ENCODE measurements at regions of chr9 and their contacts with region 1.

Region 1: DNA sequence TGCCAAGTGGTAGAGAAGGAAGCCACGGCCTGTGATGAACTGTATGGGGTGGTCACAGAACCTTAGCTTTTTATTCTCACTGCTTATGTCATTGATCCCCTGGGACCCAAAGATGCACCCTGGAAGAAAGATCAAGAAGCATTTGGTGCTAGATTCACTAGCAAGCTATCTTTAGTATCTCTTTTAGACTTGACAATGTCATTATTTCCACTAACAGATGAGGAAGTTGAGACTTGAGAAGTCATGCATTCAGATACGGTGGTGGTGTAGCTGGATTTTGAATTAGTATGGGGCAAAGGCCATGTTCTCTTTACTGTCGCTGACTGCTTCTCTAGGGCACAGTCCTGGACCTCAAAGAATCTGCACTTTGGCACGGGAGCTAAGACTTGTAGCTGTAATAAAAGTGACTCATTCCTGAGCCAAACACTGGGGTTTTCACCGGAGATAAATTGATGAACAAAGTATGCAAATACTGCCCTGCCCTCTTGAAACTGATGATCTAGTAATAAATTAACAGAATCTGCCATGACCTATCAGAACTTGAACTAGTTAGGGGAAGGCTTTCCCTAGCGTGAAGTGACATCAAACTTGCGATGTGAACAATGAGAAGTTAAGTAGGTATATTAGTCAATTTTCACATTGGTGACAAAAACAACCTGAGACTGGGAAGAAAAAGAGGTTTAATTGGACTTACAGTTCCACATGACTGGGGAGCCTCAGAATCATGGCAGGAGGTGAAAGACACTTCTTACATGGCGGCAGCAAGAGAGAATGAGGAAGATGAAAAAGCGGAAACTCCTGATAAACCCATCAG is 5.4 kb downstream of the GDA start:
- DNase-seq: no peak
- H3K4me3 ChIP-seq: no peak overlapping the region
- H3K27ac ChIP-seq: no peak overlapping the region
- H3K4me1 ChIP-seq: no peaks in the 10 kb centered on the region
- H3K27me3 ChIP-seq: peaks cover 0 to 9% of the 10 kb centered on the region in 2 donors
- CTCF ChIP-seq: no peak
- POLR2A ChIP-seq: no peak

Region 2: GRCh38 chr9:72169178-72169577 is 14.5 kb after region 1 on chr9:
- intact Hi-C with region 1: no loop called
- DNase-seq: no peak
- H3K4me3 ChIP-seq: no peak overlapping the region
- H3K27ac ChIP-seq: no peak overlapping the region
- H3K4me1 ChIP-seq: no peaks in the 10 kb centered on the region
- H3K27me3 ChIP-seq: no peaks in the 10 kb centered on the region
- CTCF ChIP-seq: no peak
- POLR2A ChIP-seq: no peak

Region 3: DNA sequence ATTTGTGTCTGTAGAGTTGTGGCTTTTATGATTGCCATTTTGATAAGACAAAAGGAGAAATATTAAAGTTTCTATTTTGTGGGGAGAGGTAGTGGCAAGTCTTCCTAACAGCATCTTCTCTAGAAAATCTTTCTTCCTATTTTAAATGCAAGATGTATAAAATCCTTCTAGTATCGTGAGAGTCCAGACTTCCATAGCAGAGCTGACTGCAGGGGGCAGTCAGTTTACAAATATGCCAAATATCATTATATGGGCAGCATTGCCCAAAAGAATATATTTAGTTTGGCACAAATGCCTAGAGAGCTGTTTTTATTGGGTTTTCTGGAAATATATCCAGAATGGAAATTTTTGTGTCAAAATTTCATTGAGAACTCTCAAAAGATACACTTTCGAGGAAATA is 880.3 kb after region 1 on chr9:
- intact Hi-C with region 1: no loop called
- DNase-seq: no peak
- H3K4me3 ChIP-seq: no peak overlapping the region
- H3K27ac ChIP-seq: no peak overlapping the region
- H3K4me1 ChIP-seq: no peaks in the 10 kb centered on the region
- H3K27me3 ChIP-seq: no peaks in the 10 kb centered on the region
- CTCF ChIP-seq: no peak
- POLR2A ChIP-seq: no peak

Region 4: DNA sequence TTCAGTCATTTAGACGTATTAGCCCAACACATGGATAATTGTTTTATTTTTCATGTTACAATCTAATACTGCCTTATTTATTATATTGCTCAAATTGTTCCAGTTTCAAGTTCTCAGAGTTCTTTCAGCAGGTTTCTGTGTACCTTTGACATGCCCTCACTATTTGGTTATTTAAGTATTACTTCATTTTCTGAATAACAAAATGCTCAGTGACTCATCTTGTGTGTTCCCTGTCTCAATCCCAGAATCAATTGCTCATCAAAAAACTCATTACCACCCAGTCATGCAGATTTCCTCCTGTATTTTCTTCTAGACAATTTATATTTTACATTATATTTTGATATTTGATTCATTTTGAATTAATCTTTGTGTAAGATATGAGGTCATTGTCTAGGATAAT is 1559.6 kb after region 1 on chr9:
- intact Hi-C with region 1: loop called (anchors 5 kb)
- DNase-seq: no peak
- H3K4me3 ChIP-seq: no peak overlapping the region
- H3K27ac ChIP-seq: no peak overlapping the region
- H3K4me1 ChIP-seq: no peaks in the 10 kb centered on the region
- H3K27me3 ChIP-seq: no peaks in the 10 kb centered on the region
- CTCF ChIP-seq: no peak
- POLR2A ChIP-seq: no peak